Astrocyte of the cerebellum (primary cell): ENCODE measurements at regions of chr10 and their contacts with region 1.

Region 1: GRCh38 chr10:99845837-99846382 is 63.5 kb downstream of the ABCC2 start:
- DNase-seq: peak; percentile 92
- H3K4me3 ChIP-seq: peak overlapping the region; percentile 16
- CTCF ChIP-seq: peak; percentile 89

Region 2: DNA sequence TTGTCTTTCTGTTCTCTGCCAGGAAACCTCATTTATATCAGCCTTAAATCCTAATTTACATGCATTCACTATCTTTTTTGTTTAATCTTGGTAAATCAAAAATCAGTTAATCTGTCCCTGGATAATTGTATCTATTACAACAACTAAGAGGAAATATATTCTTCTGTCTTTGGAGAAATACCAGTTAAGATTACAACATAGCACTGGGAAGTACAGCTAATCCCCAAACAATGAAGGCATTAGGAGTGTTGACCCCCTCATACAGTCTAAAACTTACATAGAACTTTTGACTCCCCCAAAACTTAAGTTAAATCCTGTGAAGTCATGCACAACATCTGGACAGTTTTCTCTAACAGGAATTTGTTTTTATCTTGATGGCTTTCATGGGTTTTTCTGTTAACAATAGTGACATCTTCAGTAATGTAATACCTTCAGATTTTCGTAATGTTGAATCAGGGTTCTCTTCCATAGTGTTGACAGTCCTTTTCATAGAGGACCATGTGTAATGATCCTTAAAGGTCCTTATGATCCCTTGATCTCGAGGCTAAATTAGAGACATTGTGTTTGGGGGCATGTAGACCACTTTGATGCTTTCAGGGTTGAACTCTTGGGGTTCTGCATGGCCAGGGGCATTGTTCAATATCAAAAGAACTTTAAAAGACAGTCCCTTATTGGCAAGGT is 87.6 kb before region 1 on chr10:
- in situ Hi-C with region 1: loop called (anchors 5 kb)
- DNase-seq: no peak
- H3K4me3 ChIP-seq: no peak overlapping the region
- CTCF ChIP-seq: no peak

Region 3: GRCh38 chr10:99798031-99798430 is 47.9 kb before region 1 on chr10:
- in situ Hi-C with region 1: no loop called
- DNase-seq: no peak
- H3K4me3 ChIP-seq: no peak overlapping the region
- CTCF ChIP-seq: no peak

Region 4: GRCh38 chr10:99888622-99889021 is 42.7 kb after region 1 on chr10:
- in situ Hi-C with region 1: no loop called
- DNase-seq: no peak
- H3K4me3 ChIP-seq: no peak overlapping the region
- CTCF ChIP-seq: no peak

Region 5: GRCh38 chr10:100046021-100046486 is 200.1 kb after region 1 on chr10:
- in situ Hi-C with region 1: loop called (anchors 5 kb)
- DNase-seq: peak; percentile 78
- H3K4me3 ChIP-seq: no peak overlapping the region
- CTCF ChIP-seq: peak; percentile 94